ENCODE measurements at regions of chr14 and their contacts with region 1.

Region 1: GRCh38 chr14:74018586-74019407 is at the starts of genes BBOF1 and ENTPD5:
- DNase-seq: peak; percentile 86 to 90 (median 88)
- ATAC-seq: peak; percentile 90
- H3K4me3 ChIP-seq: peak within 1 kb of the TSS; percentile 63
- H3K27ac ChIP-seq: peak within 1 kb of the TSS; percentile 89
- H3K4me1 ChIP-seq: peaks cover 17 to 28% of the 10 kb centered on the region in 2 experiments; a peak in 4 of 5 replicates
- H3K27me3 ChIP-seq: no peaks in the 10 kb centered on the region
- CTCF ChIP-seq: no peak
- EP300 ChIP-seq: no peak
- POLR2A ChIP-seq: peak; percentile 82
- RAD21 ChIP-seq: no peak
- polyA plus RNA-seq, gene BBOF1: 1.3 to 1.7 TPM
- polyA plus RNA-seq, gene ENTPD5: 2.7 to 5.4 TPM

Region 2: DNA sequence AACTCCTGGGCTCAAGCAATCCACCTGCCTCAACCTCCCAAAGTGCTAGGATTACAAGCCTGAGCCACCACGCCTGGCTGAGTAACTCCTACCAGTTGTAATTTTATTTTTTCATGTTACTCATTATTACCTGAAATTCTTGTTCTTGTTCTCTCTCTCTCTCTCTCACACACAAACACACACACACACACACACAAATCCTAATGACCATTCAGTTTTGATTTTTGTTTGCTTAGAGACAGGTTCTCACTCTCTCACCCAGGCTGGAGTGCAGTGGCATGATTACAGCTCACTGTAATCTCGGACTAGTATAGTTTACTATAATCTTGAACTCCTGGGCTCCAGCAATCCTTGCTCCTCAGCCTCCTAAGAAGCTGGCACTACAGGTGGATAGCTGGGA is 343.8 kb before region 1 on chr14:
- CTCF ChIA-PET with region 1: no interaction called
- POLR2A ChIA-PET with region 1: no interaction called
- in situ Hi-C with region 1: no loop called
- intact Hi-C with region 1: no loop called
- DNase-seq: no peak
- ATAC-seq: no peak
- H3K4me3 ChIP-seq: no peak overlapping the region
- H3K27ac ChIP-seq: no peak overlapping the region
- H3K4me1 ChIP-seq: no peaks in the 10 kb centered on the region
- H3K27me3 ChIP-seq: no peaks in the 10 kb centered on the region
- CTCF ChIP-seq: no peak
- EP300 ChIP-seq: no peak
- POLR2A ChIP-seq: no peak
- RAD21 ChIP-seq: no peak

Region 3: GRCh38 chr14:73949744-73950734 is 68.8 kb before region 1 on chr14 and contains the starts of genes COQ6 and FAM161B:
- CTCF ChIA-PET with region 1: no interaction called
- POLR2A ChIA-PET with region 1: no interaction called
- in situ Hi-C with region 1: no loop called
- intact Hi-C with region 1: loop called (anchors 5 kb)
- DNase-seq: peak; percentile 76 to 95 (median 80)
- ATAC-seq: peak; percentile 96
- H3K4me3 ChIP-seq: peak within 1 kb of the TSS; percentile 64
- H3K27ac ChIP-seq: peak within 1 kb of the TSS; percentile 94
- H3K4me1 ChIP-seq: peaks cover 0 to 3% of the 10 kb centered on the region in 2 experiments; a peak in 2 of 5 replicates
- H3K27me3 ChIP-seq: no peaks in the 10 kb centered on the region
- CTCF ChIP-seq: peak; percentile 27 to 54 (median 31); a peak in 3 of 6 replicates
- EP300 ChIP-seq: no peak
- POLR2A ChIP-seq: peak; percentile 96
- RAD21 ChIP-seq: no peak; a peak in 1 of 4 replicates
- polyA plus RNA-seq, gene COQ6: 4.3 to 7.0 TPM
- polyA plus RNA-seq, gene FAM161B: 0.15 to 0.24 TPM

Region 4: DNA sequence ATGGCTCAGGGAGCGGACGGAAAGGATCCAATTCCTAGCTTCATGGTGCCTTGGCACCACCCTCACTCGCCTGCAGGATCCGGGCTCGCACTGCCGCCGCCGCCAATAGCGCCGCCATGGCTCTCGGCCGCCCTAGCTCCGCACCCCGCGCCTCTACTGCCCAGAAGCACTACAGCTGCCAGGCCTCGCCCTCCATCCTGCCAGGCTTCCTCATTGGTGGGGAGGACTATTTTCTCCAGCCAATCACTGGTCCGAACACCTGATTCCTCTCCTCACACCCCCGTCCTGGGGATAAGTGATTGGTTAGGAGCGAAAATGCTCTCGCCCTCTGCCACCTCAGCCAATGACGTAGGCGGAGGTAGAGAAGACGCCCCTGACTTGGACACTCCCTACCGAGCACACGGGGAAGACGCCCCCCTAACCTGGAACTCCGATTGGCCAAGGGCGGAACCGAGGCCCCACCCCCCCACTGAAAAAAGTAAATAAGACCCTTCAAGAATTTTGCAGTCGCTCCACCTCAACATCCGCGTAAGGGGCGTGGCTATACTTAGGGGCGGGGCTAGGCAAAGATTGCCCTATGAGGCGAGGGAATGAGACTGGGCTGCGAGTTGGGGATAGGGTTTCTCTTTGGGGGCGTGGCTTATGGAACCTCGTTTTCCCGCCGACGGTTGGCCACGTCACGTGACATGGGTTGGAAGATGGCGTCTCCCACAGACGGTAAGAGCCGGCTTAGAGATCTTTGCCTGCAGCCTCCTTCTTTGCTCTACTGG is 65.7 kb after region 1 on chr14 and contains the starts of genes ALDH6A1 and LIN52:
- CTCF ChIA-PET with region 1: no interaction called
- POLR2A ChIA-PET with region 1: no interaction called
- in situ Hi-C with region 1: no loop called
- intact Hi-C with region 1: no loop called
- DNase-seq: peak; percentile 96 to 99 (median 98)
- ATAC-seq: peak; percentile 98
- H3K4me3 ChIP-seq: peak within 1 kb of the TSS; percentile 90
- H3K27ac ChIP-seq: peak within 1 kb of the TSS; percentile 94
- H3K4me1 ChIP-seq: peaks cover 7 to 13% of the 10 kb centered on the region in 2 experiments; a peak in 3 of 5 replicates
- H3K27me3 ChIP-seq: no peaks in the 10 kb centered on the region
- CTCF ChIP-seq: peak in 1 of 3 experiments; percentile 21; a peak in 1 of 6 replicates
- EP300 ChIP-seq: no peak; the same call in 1 of the 2 replicates
- POLR2A ChIP-seq: peak; percentile 80
- RAD21 ChIP-seq: no peak; a peak in 1 of 4 replicates
- polyA plus RNA-seq, gene ALDH6A1: 3.1 to 4.5 TPM
- polyA plus RNA-seq, gene LIN52: 7.3 to 11.8 TPM

Measured in K562 (cell line).